ENCODE measurements at regions of chr20 and their contacts with region 1.

Region 1: DNA sequence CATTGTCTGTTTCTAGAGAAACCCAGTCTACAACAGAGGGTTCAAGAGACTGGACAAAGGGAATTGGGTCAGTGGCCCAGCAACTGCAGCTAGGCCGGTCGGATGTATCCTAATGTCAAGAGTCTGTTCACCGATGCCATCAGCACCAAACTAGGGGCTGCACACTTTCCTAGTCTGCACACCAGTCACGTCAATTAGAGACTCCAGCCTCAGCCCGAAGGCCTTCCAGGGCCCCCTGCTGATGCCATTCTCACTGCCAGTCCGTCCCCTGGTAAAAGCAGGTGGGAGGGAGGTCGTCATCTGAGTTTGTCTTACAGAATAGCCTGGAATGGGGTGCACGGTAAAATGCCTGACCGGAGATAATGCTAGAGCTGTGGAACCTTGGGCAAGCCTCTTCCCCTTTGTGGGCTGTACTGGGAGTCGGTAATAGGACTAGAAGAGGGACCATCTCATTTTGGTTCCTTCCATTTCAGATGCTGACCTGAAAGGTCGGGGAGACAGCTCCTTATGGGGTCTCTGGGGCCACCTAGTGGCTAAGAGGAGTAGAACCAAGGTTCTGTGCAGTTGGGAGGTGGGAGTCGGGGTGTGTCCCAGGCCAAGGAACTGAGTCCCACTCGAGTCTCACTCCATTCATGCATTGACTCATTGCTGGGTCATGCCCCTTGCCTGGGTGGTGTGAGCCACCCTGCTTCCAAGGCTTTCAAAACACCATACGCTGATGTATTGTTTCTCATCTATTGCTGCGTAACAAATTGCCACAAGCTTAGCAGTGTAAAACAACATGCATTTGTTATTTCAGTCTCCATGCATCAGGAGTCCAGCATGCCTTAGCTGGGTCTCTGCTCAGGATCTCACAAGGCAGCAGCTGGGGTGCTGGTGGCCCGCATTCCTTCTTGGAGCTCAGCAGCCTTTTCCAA is 5.1 kb downstream of the SOX12 start:
- DNase-seq: peak; percentile 75
- ATAC-seq: peak; percentile 48
- H3K4me3 Mint-ChIP-seq: no peak overlapping the region
- H3K27ac Mint-ChIP-seq: no peak overlapping the region
- H3K4me1 Mint-ChIP-seq: peaks cover 21% of the 10 kb centered on the region
- H3K27me3 Mint-ChIP-seq: no peaks in the 10 kb centered on the region

Region 2: DNA sequence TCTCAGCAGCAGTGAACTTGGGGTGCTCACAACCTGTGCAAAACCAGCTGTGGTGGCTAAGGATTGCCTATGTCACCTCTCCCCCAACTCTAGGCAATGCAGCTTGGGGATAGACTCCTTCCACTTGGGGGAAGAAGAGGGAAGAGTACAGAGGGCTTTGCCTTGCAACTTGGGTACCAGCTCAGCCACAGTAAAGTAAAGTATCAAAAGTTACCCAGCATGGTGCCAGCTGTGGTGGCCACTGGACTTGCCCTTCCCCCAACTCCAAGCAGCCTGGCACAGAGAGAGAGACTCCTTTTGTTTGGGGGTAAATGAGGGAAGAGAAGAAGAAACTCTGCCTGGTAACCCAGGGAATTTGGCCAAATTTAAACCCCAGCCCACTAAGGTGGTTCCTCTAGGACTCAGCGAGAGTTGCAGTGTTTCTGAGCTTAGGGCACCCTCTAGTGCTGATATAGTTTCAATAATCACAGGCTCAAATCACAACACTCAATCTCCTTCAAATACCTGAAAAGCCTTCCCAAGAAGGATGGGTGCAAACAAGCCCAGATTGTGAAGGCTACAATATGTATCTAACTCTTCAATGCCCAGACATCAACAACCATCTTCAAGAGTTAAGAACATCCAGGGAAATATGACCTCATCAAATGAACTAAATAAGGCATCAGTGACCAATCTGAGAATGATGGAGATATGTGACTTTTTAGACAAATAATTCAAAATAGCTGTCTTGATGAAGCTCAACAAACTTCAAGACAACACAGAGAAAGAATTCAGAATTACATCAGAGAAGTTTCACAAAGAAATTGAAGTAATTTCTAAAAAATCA is 111.0 kb before region 1 on chr20:
- CTCF ChIA-PET with region 1: interaction called, 10 read pairs
- DNase-seq: no peak
- ATAC-seq: no peak
- H3K4me3 Mint-ChIP-seq: no peak overlapping the region
- H3K27ac Mint-ChIP-seq: no peak overlapping the region
- H3K4me1 Mint-ChIP-seq: no peaks in the 10 kb centered on the region
- H3K27me3 Mint-ChIP-seq: peaks cover 56% of the 10 kb centered on the region

Region 3: GRCh38 chr20:297098-297924 is 33.2 kb before region 1 on chr20 and contains the start of gene ZCCHC3:
- CTCF ChIA-PET with region 1: interaction called, 30 read pairs
- DNase-seq: peak; percentile 89
- ATAC-seq: peak; percentile 83
- H3K4me3 Mint-ChIP-seq: peak within 1 kb of the TSS; percentile 93
- H3K27ac Mint-ChIP-seq: peak within 1 kb of the TSS; percentile 97
- H3K4me1 Mint-ChIP-seq: peaks cover 47% of the 10 kb centered on the region
- H3K27me3 Mint-ChIP-seq: no peaks in the 10 kb centered on the region
- total RNA-seq, gene ZCCHC3: 27.4 to 28.2 TPM

Region 4: GRCh38 chr20:341682-342081 is 11.2 kb after region 1 on chr20:
- CTCF ChIA-PET with region 1: interaction called, 11 read pairs
- DNase-seq: no peak
- ATAC-seq: peak; percentile 51
- H3K4me3 Mint-ChIP-seq: no peak overlapping the region
- H3K27ac Mint-ChIP-seq: no peak overlapping the region
- H3K4me1 Mint-ChIP-seq: peaks cover 9% of the 10 kb centered on the region
- H3K27me3 Mint-ChIP-seq: peaks cover 5% of the 10 kb centered on the region

Measured in activated CD8-positive, alpha-beta memory T cell treated with anti-CD3 and anti-CD28 coated beads, Interleukin-2, amount 10 ng/mL, durations not matched to agents 7 days and 5 days (primary cell).